ENCODE measurements at regions of chr16 and their contacts with region 1.

Region 1: GRCh38 chr16:88448461-88449266 is 4.4 kb upstream of the ZFPM1 start:
- DNase-seq: peak in 2 of 5 donors; percentile 26 to 39
- H3K4me3 ChIP-seq: no peak overlapping the region
- H3K27ac ChIP-seq: no peak overlapping the region
- H3K4me1 ChIP-seq: peaks cover 0 to 18% (median 0%) of the 10 kb centered on the region in 3 donors
- H3K27me3 ChIP-seq: no peaks in the 10 kb centered on the region
- CTCF ChIP-seq: no peak

Region 2: DNA sequence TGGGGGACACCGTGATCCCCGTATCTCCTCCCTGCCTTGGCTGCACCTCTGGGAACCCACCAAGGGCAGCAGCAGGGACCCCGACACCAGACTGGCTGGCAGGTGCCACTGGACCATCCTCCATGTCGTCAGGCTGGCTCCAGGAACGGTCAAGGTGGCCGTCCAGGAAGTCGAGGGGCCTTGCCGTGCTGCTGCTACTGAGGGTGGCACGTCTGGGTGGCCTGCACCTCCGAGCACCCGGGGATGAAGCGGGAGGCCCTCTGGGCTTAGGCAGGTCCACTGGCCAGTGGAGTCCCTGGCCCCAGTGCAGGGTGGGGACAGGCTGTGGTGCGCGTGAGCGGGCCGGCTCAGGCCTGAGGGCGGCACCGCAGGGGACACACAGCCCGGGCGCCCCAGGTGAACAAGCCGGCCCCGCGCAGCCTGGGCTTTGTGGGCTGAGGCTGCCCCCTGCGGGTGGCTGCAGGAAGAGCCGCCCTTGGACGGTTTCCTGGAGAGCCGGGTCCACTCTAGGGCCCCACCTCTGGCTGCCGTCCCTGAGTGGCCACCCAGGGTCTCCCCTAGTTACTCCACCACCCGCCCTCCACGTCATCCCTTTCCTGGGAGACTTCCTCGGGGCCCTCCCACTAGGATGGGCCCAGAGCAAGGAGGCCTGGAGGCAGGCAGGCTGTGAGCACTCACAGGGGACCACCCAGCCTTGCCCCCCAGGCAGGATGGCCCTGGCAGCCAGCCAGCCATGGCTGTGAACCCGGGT is 78.7 kb after region 1 on chr16:
- intact Hi-C with region 1: loop called (anchors 5 kb)
- DNase-seq: peak; percentile 73 to 90 (median 83)
- H3K4me3 ChIP-seq: no peak overlapping the region
- H3K27ac ChIP-seq: no peak overlapping the region
- H3K4me1 ChIP-seq: peaks cover 0 to 15% (median 3%) of the 10 kb centered on the region in 3 donors
- H3K27me3 ChIP-seq: no peaks in the 10 kb centered on the region
- CTCF ChIP-seq: peak; percentile 87

Region 3: DNA sequence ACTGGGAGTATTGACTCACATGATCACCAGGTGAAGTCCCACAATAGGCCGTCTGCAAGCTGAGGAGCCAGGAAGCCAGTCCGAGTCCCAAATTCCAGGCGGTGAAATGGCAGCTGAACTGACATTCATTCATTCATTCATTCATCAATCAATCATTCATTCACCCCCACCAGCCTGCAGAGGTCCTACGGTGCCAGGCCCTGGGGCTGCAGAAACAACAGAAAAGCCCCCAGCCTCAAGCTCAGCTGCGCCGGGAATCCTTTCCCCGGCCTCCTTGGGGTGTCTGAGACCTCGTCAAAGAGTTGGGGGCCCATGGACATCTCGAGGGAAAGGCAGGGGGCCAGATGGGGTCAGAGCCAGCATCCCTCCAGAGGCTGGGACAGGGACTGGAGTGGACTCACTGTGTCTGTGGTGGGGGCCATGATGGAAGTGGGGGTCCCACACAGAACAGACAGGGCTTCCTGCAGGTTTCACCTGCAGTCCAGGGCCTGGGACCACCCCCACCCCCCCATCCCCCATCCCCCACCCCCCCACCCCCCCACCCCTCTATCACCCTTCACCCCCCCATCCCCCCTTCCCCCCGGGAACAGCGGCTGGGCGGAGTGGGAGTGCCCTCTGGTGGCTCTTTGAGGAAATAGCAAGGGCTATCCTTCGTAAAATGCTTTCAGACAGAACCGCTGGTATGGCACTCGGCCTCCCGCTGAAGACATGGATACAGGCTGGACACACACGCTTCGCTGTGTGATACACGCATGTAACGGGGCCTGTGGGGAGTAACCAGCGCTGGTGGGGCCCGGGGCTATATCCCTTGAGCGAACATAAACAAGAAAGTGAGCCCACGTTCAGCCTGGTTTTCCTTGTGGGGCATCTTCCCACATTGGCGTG is 113.1 kb after region 1 on chr16:
- intact Hi-C with region 1: no loop called
- DNase-seq: peak in 4 of 5 donors; percentile 24 to 66 (median 42)
- H3K4me3 ChIP-seq: no peak overlapping the region
- H3K27ac ChIP-seq: no peak overlapping the region
- H3K4me1 ChIP-seq: peaks cover 0 to 6% (median 0%) of the 10 kb centered on the region in 3 donors
- H3K27me3 ChIP-seq: no peaks in the 10 kb centered on the region
- CTCF ChIP-seq: peak; percentile 89

Measured in kidney (tissue), 22 donors.